ENCODE measurements at regions of chr22 and their contacts with region 1.

Region 1: GRCh38 chr22:33555814-33556522 is 364.3 kb downstream of the LARGE1 start:
- DNase-seq: no peak
- H3K4me3 ChIP-seq: no peak overlapping the region
- H3K27ac ChIP-seq: no peak overlapping the region
- H3K4me1 ChIP-seq: peaks cover 1% of the 10 kb centered on the region
- H3K27me3 ChIP-seq: no peaks in the 10 kb centered on the region
- CTCF ChIP-seq: no peak
- EP300 ChIP-seq: no peak
- POLR2A ChIP-seq: no peak

Region 2: GRCh38 chr22:32754413-32755041 is 801.4 kb before region 1 on chr22:
- intact Hi-C with region 1: no loop called
- DNase-seq: no peak
- H3K4me3 ChIP-seq: no peak overlapping the region
- H3K27ac ChIP-seq: no peak overlapping the region
- H3K4me1 ChIP-seq: no peaks in the 10 kb centered on the region
- H3K27me3 ChIP-seq: no peaks in the 10 kb centered on the region
- CTCF ChIP-seq: no peak
- EP300 ChIP-seq: no peak
- POLR2A ChIP-seq: no peak

Region 3: DNA sequence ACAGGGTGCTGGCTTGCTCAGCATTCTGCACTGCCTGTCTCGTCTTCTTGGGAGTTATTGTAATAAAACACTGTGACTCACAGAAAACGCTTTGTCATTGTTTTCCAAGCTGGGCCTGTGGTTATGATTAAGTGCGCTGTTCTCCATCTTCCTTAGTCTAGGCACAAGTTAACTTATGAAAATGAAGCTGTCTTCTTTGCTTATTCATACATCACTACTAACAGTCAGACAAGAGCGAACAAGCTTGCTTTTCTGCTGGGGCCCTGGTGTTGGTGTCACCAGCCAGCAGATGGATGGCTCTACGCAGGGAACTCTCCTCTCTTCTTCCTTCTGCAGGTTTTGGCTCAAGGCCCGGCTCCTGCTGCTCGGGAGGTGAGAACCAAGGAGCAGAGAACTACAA is 117.7 kb before region 1 on chr22:
- intact Hi-C with region 1: no loop called
- DNase-seq: peak in 1 of 5 donors; percentile 12
- H3K4me3 ChIP-seq: no peak overlapping the region
- H3K27ac ChIP-seq: no peak overlapping the region
- H3K4me1 ChIP-seq: no peaks in the 10 kb centered on the region
- H3K27me3 ChIP-seq: no peaks in the 10 kb centered on the region
- CTCF ChIP-seq: no peak
- EP300 ChIP-seq: no peak
- POLR2A ChIP-seq: no peak

Region 4: GRCh38 chr22:33605666-33606065 is 49.7 kb after region 1 on chr22:
- intact Hi-C with region 1: loop called in 1 of 4 experiments (anchors 10 kb)
- DNase-seq: peak in 2 of 5 donors; percentile 32 to 58
- H3K4me3 ChIP-seq: no peak overlapping the region
- H3K27ac ChIP-seq: no peak overlapping the region
- H3K4me1 ChIP-seq: no peaks in the 10 kb centered on the region
- H3K27me3 ChIP-seq: no peaks in the 10 kb centered on the region
- CTCF ChIP-seq: no peak
- EP300 ChIP-seq: no peak
- POLR2A ChIP-seq: no peak

Measured in ovary (tissue), 10 donors.